IMR-90 (cell line): ENCODE measurements at regions of chr4 and their contacts with region 1.

Region 1: DNA sequence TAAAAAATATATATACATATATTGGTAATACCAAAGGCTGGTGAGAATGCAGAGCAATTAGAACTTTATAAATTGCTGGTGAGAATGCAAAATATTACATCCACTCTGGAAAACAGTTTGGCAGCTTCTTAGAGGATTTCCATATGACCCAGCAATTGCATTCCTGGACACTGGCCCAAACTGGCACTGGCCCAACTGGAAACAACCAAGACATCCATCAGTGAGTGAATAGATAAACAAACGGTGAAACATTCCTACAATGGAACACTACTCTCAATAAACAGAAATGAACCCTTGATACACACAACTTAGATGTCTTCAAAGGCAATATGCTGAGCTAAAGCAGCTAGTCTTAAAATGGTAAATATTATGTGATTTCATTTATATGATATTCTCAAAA is 524.2 kb downstream of the IQCM start:
- DNase-seq: peak; percentile 43
- ATAC-seq: no peak; the same call in 1 of the 2 replicates
- H3K4me3 ChIP-seq: no peak overlapping the region
- H3K27ac ChIP-seq: no peak overlapping the region
- H3K4me1 ChIP-seq: no peaks in the 10 kb centered on the region
- H3K27me3 ChIP-seq: no peaks in the 10 kb centered on the region
- CTCF ChIP-seq: no peak
- POLR2A ChIP-seq: no peak
- RAD21 ChIP-seq: no peak

Region 2: DNA sequence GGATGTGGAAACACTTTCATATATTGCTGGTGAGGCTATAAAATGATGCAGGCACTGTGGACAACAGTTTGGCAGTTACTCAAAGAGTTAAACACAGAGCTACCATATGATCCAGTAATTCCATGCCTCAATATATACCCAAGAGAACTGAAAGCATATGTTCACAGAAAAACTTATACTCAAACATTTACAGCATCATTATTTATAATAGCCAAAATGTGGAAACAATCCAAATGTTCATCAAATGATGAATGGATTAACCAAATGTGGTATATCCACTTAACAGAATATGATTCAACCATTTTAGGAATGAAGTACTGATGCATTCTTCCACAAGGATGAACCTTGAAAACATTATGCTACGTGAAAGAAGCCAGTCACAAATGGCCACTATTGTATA is 79.6 kb before region 1 on chr4:
- CTCF ChIA-PET with region 1: no interaction called
- POLR2A ChIA-PET with region 1: no interaction called
- dilution Hi-C with region 1: no loop called
- in situ Hi-C with region 1: no loop called
- intact Hi-C with region 1: no loop called
- DNase-seq: peak; percentile 34
- ATAC-seq: peak; percentile 17; the same call in 1 of the 2 replicates
- H3K4me3 ChIP-seq: no peak overlapping the region
- H3K27ac ChIP-seq: no peak overlapping the region
- H3K4me1 ChIP-seq: no peaks in the 10 kb centered on the region
- H3K27me3 ChIP-seq: no peaks in the 10 kb centered on the region
- CTCF ChIP-seq: no peak
- POLR2A ChIP-seq: no peak
- RAD21 ChIP-seq: no peak

Region 3: DNA sequence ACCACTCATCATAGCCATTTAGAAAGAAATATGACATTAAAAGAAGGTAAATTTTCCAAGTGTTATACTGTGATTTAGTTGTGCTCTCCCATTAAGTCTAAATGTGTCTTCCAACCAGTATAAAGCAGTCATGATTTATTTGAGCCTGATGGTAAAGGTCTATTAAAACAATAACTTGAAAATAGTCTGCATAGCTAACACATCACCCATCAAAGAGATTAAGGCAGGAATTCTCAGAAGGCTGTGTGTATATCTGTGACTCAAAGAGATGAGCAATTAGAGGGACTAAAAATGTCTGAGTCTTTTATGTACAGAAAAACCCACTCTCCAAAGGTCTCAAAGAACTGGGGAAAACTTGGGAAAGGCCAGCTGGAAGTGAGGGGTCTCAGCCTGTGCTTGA is 594.4 kb after region 1 on chr4:
- CTCF ChIA-PET with region 1: no interaction called
- POLR2A ChIA-PET with region 1: no interaction called
- dilution Hi-C with region 1: no loop called
- in situ Hi-C with region 1: no loop called
- intact Hi-C with region 1: loop called (anchors 5 kb)
- DNase-seq: peak; percentile 79
- ATAC-seq: peak; percentile 92
- H3K4me3 ChIP-seq: no peak overlapping the region
- H3K27ac ChIP-seq: no peak overlapping the region
- H3K4me1 ChIP-seq: peaks cover 6% of the 10 kb centered on the region
- H3K27me3 ChIP-seq: no peaks in the 10 kb centered on the region
- CTCF ChIP-seq: no peak
- POLR2A ChIP-seq: no peak
- RAD21 ChIP-seq: no peak